T-cell (primary cell): ENCODE measurements at regions of chr2 and their contacts with region 1.

Region 1: GRCh38 chr2:64750817-64751285 is 97.1 kb upstream of the SERTAD2 start:
- DNase-seq: peak; percentile 92 to 99 (median 97)
- ATAC-seq: peak; percentile 85 to 87 (median 86)
- H3K4me3 ChIP-seq: peak overlapping the region; percentile 89 to 95
- H3K4me3 Mint-ChIP-seq: peak overlapping the region; percentile 87 to 97 (median 97)
- H3K27ac ChIP-seq: peak overlapping the region; percentile 95
- H3K27ac Mint-ChIP-seq: peak overlapping the region; percentile 93
- H3K4me1 ChIP-seq: peaks cover 10% of the 10 kb centered on the region in 2 experiments
- H3K4me1 Mint-ChIP-seq: peaks cover 27 to 29% (median 27%) of the 10 kb centered on the region in 3 donors
- H3K27me3 ChIP-seq: no peaks in the 10 kb centered on the region
- H3K27me3 Mint-ChIP-seq: no peaks in the 10 kb centered on the region

Region 2: GRCh38 chr2:64653349-64654062 is 97.3 kb before region 1 on chr2 and contains the start of gene SERTAD2:
- CTCF ChIA-PET with region 1: interaction called, 6 to 78 read pairs
- POLR2A ChIA-PET with region 1: interaction called, 6 to 29 read pairs
- DNase-seq: peak; percentile 71 to 93 (median 85)
- ATAC-seq: peak; percentile 89 to 91 (median 90)
- H3K4me3 ChIP-seq: peak within 1 kb of the TSS; percentile 94 to 96
- H3K4me3 Mint-ChIP-seq: peak within 1 kb of the TSS; percentile 88 to 91 (median 89)
- H3K27ac ChIP-seq: peak within 1 kb of the TSS; percentile 86
- H3K27ac Mint-ChIP-seq: peak within 1 kb of the TSS; percentile 91 to 92
- H3K4me1 ChIP-seq: peaks cover 25 to 56% of the 10 kb centered on the region in 2 experiments
- H3K4me1 Mint-ChIP-seq: peaks cover 75 to 81% (median 76%) of the 10 kb centered on the region in 3 donors
- H3K27me3 ChIP-seq: no peaks in the 10 kb centered on the region
- H3K27me3 Mint-ChIP-seq: no peaks in the 10 kb centered on the region
- total RNA-seq, gene SERTAD2: 22.8 to 39.7 (median 27.4) TPM

Region 3: DNA sequence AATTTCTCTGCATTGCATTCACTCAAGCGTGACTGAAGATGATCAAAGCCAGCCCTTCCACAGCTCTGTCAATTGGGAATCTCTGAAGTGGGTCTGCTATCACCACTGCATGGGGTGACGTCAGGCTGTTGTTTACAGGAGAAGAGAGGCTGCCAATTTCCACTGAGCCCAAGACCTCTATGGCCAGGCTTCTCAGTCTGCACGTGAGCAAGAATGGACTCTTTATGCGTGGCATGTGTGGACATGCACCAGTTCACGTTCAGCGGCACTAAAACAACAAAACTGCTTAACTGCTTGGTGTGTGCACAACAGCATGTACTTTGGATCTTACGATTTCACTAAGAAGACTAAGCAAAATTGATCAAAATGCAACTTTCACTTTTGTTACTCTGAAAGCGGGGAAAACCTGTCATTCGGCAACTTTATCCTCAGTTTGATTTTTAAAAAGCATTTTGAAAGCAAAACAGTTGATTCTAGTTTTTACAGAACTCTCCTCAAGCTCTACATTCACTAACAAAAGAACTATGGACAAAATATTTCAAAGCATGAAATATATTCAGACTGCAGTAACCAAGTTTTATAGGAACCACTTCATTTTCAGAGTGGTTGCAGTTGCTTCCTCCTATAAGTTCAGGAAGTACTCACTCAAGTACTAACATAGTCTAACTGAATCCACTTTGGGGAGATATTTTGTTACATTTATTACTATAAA is 20.1 kb before region 1 on chr2:
- CTCF ChIA-PET with region 1: interaction called, 4 to 18 read pairs
- POLR2A ChIA-PET with region 1: interaction called, 8 to 14 read pairs
- DNase-seq: peak in 34 of 35 experiments; percentile 15 to 74 (median 36)
- ATAC-seq: peak; percentile 64 to 89 (median 68)
- H3K4me3 ChIP-seq: peak overlapping the region; percentile 49 to 78
- H3K4me3 Mint-ChIP-seq: peak overlapping the region; percentile 82 to 91 (median 87)
- H3K27ac ChIP-seq: peak overlapping the region; percentile 87
- H3K27ac Mint-ChIP-seq: peak overlapping the region; percentile 97 to 99
- H3K4me1 ChIP-seq: peaks cover 19 to 26% of the 10 kb centered on the region in 2 experiments
- H3K4me1 Mint-ChIP-seq: peaks cover 56 to 66% (median 61%) of the 10 kb centered on the region in 3 donors
- H3K27me3 ChIP-seq: no peaks in the 10 kb centered on the region
- H3K27me3 Mint-ChIP-seq: no peaks in the 10 kb centered on the region

Region 4: DNA sequence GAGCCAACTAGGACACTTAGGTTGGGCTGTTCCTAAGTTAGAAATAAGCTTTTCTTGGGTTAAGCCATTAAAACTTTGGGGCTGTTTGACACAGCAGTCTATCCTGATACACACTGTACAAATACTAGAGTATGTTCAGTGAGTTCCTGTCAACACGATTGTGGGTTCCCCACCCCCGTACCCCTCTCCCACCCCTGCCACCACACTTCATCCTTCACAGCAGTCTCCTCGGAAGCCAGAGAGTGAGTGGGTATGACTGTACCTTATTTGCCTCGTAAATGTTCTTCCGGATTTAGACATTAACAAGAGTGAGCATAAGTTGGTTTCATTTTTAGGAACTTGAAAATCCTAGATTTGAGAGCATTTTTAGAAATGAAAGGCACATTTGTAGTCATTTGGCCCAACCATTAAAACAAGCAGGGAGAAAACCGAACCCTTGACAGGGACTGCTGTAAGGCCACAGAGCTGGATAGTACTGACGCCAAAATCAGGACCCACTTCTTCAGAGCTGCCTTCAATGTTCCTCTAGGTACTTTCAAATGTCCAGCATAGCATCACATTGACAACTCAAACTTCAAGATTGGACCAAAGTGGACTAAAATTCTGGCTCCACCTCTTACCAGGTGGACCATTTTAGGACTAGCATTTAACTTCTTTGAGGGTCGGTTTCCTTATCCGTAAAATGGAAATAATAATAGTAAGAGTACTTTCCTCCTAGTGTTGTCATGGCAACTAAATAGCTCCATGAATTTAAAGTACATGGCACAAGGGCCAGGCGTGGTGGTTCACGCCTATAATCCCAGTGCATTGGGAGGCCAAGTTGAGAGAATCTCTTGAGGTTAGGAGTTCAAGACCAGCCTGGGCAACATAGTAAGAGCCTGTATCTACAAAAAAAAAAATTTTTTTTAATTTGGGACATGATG is 69.2 kb after region 1 on chr2:
- CTCF ChIA-PET with region 1: interaction called in 1 of 2 experiments, 10 read pairs
- POLR2A ChIA-PET with region 1: interaction called in 1 of 2 experiments, 4 read pairs
- DNase-seq: peak; percentile 14 to 89 (median 65)
- ATAC-seq: peak; percentile 99
- H3K4me3 ChIP-seq: peak overlapping the region in 1 of 2 donors; percentile 5
- H3K4me3 Mint-ChIP-seq: peak overlapping the region; percentile 57 to 66 (median 63)
- H3K27ac ChIP-seq: peak overlapping the region; percentile 81
- H3K27ac Mint-ChIP-seq: peak overlapping the region; percentile 94 to 96
- H3K4me1 ChIP-seq: peaks cover 17 to 24% of the 10 kb centered on the region in 2 experiments
- H3K4me1 Mint-ChIP-seq: peaks cover 23 to 33% (median 28%) of the 10 kb centered on the region in 3 donors
- H3K27me3 ChIP-seq: no peaks in the 10 kb centered on the region
- H3K27me3 Mint-ChIP-seq: no peaks in the 10 kb centered on the region

Region 5: GRCh38 chr2:65292461-65293011 is 541.7 kb after region 1 on chr2:
- CTCF ChIA-PET with region 1: no interaction called
- POLR2A ChIA-PET with region 1: no interaction called
- DNase-seq: no peak
- ATAC-seq: no peak
- H3K4me3 ChIP-seq: no peak overlapping the region
- H3K4me3 Mint-ChIP-seq: no peak overlapping the region
- H3K27ac ChIP-seq: no peak overlapping the region
- H3K27ac Mint-ChIP-seq: no peak overlapping the region
- H3K4me1 ChIP-seq: peaks cover 0 to 4% of the 10 kb centered on the region in 2 experiments
- H3K4me1 Mint-ChIP-seq: peaks cover 0 to 2% (median 1%) of the 10 kb centered on the region in 3 donors
- H3K27me3 ChIP-seq: peaks cover 0 to 4% of the 10 kb centered on the region in 2 experiments
- H3K27me3 Mint-ChIP-seq: peaks cover 0 to 6% of the 10 kb centered on the region in 2 donors